ENCODE measurements at regions of chr4 and their contacts with region 1.

Region 1: GRCh38 chr4:13918110-13918509 is 290.6 kb upstream of the BOD1L1 start:
- DNase-seq: no peak
- ATAC-seq: no peak
- H3K4me3 ChIP-seq: no peak overlapping the region
- H3K4me3 Mint-ChIP-seq: no peak overlapping the region
- H3K27ac ChIP-seq: no peak overlapping the region
- H3K27ac Mint-ChIP-seq: no peak overlapping the region
- H3K4me1 ChIP-seq: no peaks in the 10 kb centered on the region
- H3K4me1 Mint-ChIP-seq: no peaks in the 10 kb centered on the region
- H3K27me3 ChIP-seq: no peaks in the 10 kb centered on the region
- H3K27me3 Mint-ChIP-seq: peaks cover 14% of the 10 kb centered on the region
- CTCF ChIP-seq: no peak

Region 2: GRCh38 chr4:13953083-13953482 is 35.0 kb after region 1 on chr4:
- CTCF ChIA-PET with region 1: no interaction called
- POLR2A ChIA-PET with region 1: no interaction called
- intact Hi-C with region 1: no loop called
- DNase-seq: no peak
- ATAC-seq: no peak
- H3K4me3 ChIP-seq: no peak overlapping the region
- H3K4me3 Mint-ChIP-seq: no peak overlapping the region
- H3K27ac ChIP-seq: no peak overlapping the region
- H3K27ac Mint-ChIP-seq: no peak overlapping the region
- H3K4me1 ChIP-seq: no peaks in the 10 kb centered on the region
- H3K4me1 Mint-ChIP-seq: no peaks in the 10 kb centered on the region
- H3K27me3 ChIP-seq: no peaks in the 10 kb centered on the region
- H3K27me3 Mint-ChIP-seq: no peaks in the 10 kb centered on the region
- CTCF ChIP-seq: no peak

Region 3: GRCh38 chr4:14650127-14650526 is 732.0 kb after region 1 on chr4:
- CTCF ChIA-PET with region 1: no interaction called
- POLR2A ChIA-PET with region 1: no interaction called
- intact Hi-C with region 1: loop called in 1 of 2 experiments (anchors 10 kb)
- DNase-seq: no peak
- ATAC-seq: no peak
- H3K4me3 ChIP-seq: no peak overlapping the region
- H3K4me3 Mint-ChIP-seq: no peak overlapping the region
- H3K27ac ChIP-seq: no peak overlapping the region
- H3K27ac Mint-ChIP-seq: no peak overlapping the region
- H3K4me1 ChIP-seq: no peaks in the 10 kb centered on the region
- H3K4me1 Mint-ChIP-seq: no peaks in the 10 kb centered on the region
- H3K27me3 ChIP-seq: no peaks in the 10 kb centered on the region
- H3K27me3 Mint-ChIP-seq: no peaks in the 10 kb centered on the region
- CTCF ChIP-seq: no peak

Measured in CD4-positive, alpha-beta T cell (primary cell).